Naive thymus-derived CD4-positive, alpha-beta T cell (primary cell): ENCODE measurements at regions of chr3 and their contacts with region 1.

Region 1: GRCh38 chr3:58305882-58306711 is at the starts of genes HTD2 and RPP14:
- DNase-seq: peak; percentile 96 to 99 (median 98)
- ATAC-seq: peak; percentile 95
- H3K4me3 ChIP-seq: peak within 1 kb of the TSS; percentile 90
- H3K4me3 Mint-ChIP-seq: peak within 1 kb of the TSS; percentile 94 to 99 (median 97)
- H3K27ac ChIP-seq: peak within 1 kb of the TSS; percentile 98
- H3K27ac Mint-ChIP-seq: peak within 1 kb of the TSS; percentile 99 to 100 (median 99)
- H3K4me1 ChIP-seq: peaks cover 21 to 24% of the 10 kb centered on the region in 2 donors
- H3K4me1 Mint-ChIP-seq: peaks cover 28 to 47% (median 36%) of the 10 kb centered on the region in 7 donors
- H3K27me3 ChIP-seq: no peaks in the 10 kb centered on the region
- H3K27me3 Mint-ChIP-seq: peaks cover 5 to 13% (median 8%) of the 10 kb centered on the region in 5 donors
- total RNA-seq, gene HTD2: 4.5 to 10.6 (median 9.2) TPM
- total RNA-seq, gene RPP14: 14.8 to 21.6 (median 17.6) TPM

Region 2: DNA sequence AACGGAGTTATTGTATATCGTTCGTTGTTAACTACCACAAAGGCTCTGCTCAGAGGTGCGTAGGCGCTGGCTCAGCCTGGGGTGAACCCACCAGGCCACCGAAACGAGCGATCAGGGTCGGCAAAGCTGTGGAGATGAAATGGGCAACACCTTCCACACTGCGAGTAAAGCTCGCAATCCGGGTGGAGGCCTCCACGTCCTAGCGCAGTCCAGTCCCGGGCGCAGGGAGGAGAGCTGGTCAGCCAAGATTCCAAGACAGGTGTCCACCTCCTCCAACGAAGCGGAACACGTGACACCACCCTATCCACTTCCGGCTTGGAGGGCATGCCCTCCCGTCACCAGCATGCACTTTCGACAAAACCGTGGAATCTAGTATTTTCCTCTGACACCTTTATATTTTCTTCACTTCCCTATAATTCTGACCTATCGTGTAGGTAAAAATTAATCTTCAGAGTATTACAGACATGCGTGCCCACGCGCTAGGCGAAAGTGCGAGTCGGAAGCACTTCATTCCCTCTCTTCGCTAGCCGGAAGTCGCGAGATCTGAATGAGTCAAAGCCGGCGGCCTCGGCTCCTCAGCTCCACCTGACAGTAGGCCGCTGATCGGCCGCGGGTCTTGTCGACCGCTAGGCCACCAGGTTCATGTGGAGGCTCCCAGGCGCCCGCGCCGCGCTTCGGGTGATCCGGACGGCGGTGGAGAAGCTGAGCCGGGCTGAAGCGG is 750.2 kb before region 1 on chr3 and contains the start of gene PDE12:
- CTCF ChIA-PET with region 1: no interaction called
- POLR2A ChIA-PET with region 1: interaction called, 3 read pairs
- intact Hi-C with region 1: loop called in 1 of 2 experiments (anchors 1 kb)
- DNase-seq: peak; percentile 68 to 87 (median 81)
- ATAC-seq: peak; percentile 86
- H3K4me3 ChIP-seq: peak within 1 kb of the TSS; percentile 74
- H3K4me3 Mint-ChIP-seq: peak within 1 kb of the TSS; percentile 85 to 99 (median 92)
- H3K27ac ChIP-seq: peak within 1 kb of the TSS; percentile 96
- H3K27ac Mint-ChIP-seq: peak within 1 kb of the TSS; percentile 94 to 99 (median 98)
- H3K4me1 ChIP-seq: peaks cover 22 to 26% of the 10 kb centered on the region in 2 donors
- H3K4me1 Mint-ChIP-seq: peaks cover 13 to 50% (median 39%) of the 10 kb centered on the region in 7 donors
- H3K27me3 ChIP-seq: no peaks in the 10 kb centered on the region
- H3K27me3 Mint-ChIP-seq: no peaks in the 10 kb centered on the region
- total RNA-seq, gene PDE12: 24.0 to 35.5 (median 27.8) TPM

Region 3: DNA sequence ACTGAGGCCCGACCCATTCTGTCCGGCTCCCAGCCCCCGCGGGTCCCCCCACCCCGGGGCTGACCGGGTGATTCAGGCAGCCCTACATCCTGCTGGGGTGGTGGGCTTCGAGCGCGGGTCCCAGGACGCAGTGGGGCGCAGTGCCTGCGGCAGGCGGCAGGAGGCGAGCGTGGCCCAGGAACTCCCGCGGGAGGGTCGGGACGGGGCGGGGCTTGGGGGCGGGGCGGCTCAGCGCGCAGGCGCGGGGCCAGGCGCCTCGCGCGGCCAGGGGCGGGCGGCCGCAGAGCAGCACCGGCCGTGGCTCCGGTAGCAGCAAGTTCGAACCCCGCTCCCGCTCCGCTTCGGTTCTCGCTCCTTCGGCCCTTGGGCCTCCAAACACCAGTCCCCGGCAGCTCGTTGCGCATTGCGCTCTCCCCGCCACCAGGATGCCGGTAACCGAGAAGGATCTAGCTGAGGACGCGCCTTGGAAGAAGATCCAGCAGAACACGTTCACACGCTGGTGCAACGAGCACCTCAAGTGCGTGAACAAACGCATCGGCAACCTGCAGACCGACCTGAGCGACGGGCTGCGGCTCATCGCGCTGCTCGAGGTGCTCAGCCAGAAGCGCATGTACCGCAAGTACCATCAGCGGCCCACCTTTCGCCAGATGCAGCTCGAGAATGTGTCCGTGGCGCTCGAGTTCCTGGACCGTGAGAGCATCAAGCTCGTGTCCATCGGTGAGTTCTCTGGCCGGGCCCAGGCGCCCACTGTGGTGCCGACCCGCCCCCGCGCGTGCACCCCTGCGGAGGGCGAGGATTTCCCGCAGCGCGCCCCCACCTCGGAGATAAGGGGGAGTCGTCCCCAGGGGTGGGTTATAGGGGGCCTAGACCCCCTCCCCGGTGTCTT is 297.7 kb before region 1 on chr3 and contains the start of gene FLNB:
- CTCF ChIA-PET with region 1: interaction called, 4 read pairs
- POLR2A ChIA-PET with region 1: interaction called, 9 read pairs
- intact Hi-C with region 1: loop called (anchors 1 to 2 kb)
- DNase-seq: peak; percentile 61 to 83 (median 77)
- ATAC-seq: peak; percentile 95
- H3K4me3 ChIP-seq: peak within 1 kb of the TSS; percentile 100
- H3K4me3 Mint-ChIP-seq: peak within 1 kb of the TSS; percentile 78 to 93 (median 90)
- H3K27ac ChIP-seq: peak within 1 kb of the TSS; percentile 66
- H3K27ac Mint-ChIP-seq: peak within 1 kb of the TSS; percentile 61 to 95 (median 81)
- H3K4me1 ChIP-seq: peaks cover 9 to 32% of the 10 kb centered on the region in 2 donors
- H3K4me1 Mint-ChIP-seq: peaks cover 30 to 42% (median 41%) of the 10 kb centered on the region in 7 donors
- H3K27me3 ChIP-seq: no peaks in the 10 kb centered on the region
- H3K27me3 Mint-ChIP-seq: no peaks in the 10 kb centered on the region
- total RNA-seq, gene FLNB: 39.3 to 66.7 (median 64.9) TPM

Region 4: GRCh38 chr3:58025837-58026569 is 280.1 kb before region 1 on chr3:
- CTCF ChIA-PET with region 1: no interaction called
- POLR2A ChIA-PET with region 1: no interaction called
- intact Hi-C with region 1: no loop called
- DNase-seq: no peak
- ATAC-seq: no peak
- H3K4me3 ChIP-seq: no peak overlapping the region
- H3K4me3 Mint-ChIP-seq: peak overlapping the region in 1 of 10 donors; percentile 30
- H3K27ac ChIP-seq: no peak overlapping the region
- H3K27ac Mint-ChIP-seq: peak overlapping the region in 4 of 9 donors; percentile 33 to 71 (median 56)
- H3K4me1 ChIP-seq: no peaks in the 10 kb centered on the region
- H3K4me1 Mint-ChIP-seq: peaks cover 23 to 63% (median 46%) of the 10 kb centered on the region in 7 donors
- H3K27me3 ChIP-seq: no peaks in the 10 kb centered on the region
- H3K27me3 Mint-ChIP-seq: no peaks in the 10 kb centered on the region

Region 5: DNA sequence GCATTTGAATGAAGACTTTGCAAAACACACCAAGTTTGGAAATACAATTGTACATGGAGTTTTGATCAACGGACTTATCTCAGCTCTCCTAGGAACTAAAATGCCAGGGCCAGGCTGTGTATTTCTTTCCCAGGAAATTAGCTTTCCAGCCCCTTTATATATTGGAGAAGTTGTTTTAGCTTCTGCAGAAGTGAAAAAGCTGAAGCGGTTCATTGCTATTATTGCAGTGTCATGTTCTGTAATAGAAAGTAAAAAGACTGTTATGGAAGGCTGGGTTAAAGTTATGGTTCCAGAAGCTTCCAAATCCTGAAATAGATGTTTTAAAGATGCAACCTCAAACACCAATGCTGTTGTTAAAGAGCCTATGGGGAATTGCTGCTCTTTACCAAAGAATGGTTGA is 11.7 kb after region 1 on chr3:
- CTCF ChIA-PET with region 1: interaction called, 42 read pairs
- POLR2A ChIA-PET with region 1: interaction called, 5 read pairs
- intact Hi-C with region 1: no loop called
- DNase-seq: no peak
- ATAC-seq: no peak
- H3K4me3 ChIP-seq: no peak overlapping the region
- H3K4me3 Mint-ChIP-seq: no peak overlapping the region
- H3K27ac ChIP-seq: no peak overlapping the region
- H3K27ac Mint-ChIP-seq: peak overlapping the region in 2 of 9 donors; percentile 17 to 24
- H3K4me1 ChIP-seq: no peaks in the 10 kb centered on the region
- H3K4me1 Mint-ChIP-seq: peaks cover 3 to 23% (median 13%) of the 10 kb centered on the region in 7 donors
- H3K27me3 ChIP-seq: no peaks in the 10 kb centered on the region
- H3K27me3 Mint-ChIP-seq: no peaks in the 10 kb centered on the region

Region 6: DNA sequence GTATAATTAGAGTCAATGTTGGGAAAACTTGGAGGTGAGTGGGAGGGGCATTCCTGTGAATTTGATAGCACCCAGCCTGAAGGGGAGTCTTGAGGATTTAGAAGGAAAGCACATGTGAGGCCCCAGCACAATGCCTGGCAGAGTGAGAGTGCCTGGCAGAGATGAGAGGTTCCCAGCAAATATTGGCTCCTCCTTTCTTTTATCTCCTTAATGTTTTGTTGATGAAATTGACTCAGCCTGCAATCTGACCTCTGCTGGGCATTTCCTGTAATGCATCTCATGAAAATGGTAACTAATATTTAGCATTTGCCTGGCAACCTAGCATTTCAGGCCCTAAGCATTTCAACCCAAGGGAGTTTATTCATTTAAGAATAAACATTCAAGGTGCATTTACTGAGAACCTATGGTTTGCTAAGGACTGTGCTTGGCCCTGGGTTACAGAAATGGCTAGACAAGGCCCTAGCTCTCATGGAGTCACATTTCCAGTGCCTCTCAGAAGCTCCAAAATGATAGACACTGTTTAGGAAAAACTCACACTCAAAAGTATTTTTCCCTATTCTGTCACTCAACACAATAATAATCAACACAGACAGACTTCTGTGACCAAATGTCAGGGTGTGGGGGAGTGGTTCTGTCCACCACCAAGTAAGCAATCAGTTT is 108.6 kb after region 1 on chr3:
- CTCF ChIA-PET with region 1: interaction called, 10 read pairs
- POLR2A ChIA-PET with region 1: interaction called, 3 read pairs
- intact Hi-C with region 1: loop called (anchors 1 kb)
- DNase-seq: peak in 7 of 9 donors; percentile 39 to 59 (median 47)
- ATAC-seq: peak; percentile 83
- H3K4me3 ChIP-seq: no peak overlapping the region
- H3K4me3 Mint-ChIP-seq: no peak overlapping the region
- H3K27ac ChIP-seq: no peak overlapping the region
- H3K27ac Mint-ChIP-seq: peak overlapping the region in 3 of 9 donors; percentile 5 to 48 (median 9)
- H3K4me1 ChIP-seq: no peaks in the 10 kb centered on the region
- H3K4me1 Mint-ChIP-seq: peaks cover 2 to 14% (median 8%) of the 10 kb centered on the region in 7 donors
- H3K27me3 ChIP-seq: no peaks in the 10 kb centered on the region
- H3K27me3 Mint-ChIP-seq: no peaks in the 10 kb centered on the region

Region 7: DNA sequence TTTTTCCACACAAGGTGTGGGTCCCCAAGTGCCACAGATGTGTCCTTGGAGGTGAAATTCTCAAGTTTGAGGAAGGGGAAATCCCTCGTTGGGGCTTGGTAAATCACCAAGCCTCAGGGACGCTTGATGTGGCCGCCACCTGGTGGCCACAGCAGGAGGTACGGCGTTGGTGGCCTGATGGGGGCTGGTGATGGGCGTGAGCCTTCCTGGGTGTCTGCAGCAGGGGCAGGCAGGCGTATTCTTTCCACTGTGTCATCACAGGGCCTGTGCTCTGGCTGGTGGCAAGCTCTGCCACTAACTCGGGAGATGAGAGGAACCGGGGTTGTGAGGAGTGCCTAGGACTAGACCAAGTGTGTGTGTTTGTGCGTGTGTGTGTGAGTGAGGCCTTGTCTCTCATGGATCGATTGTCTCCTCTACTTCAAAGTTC is 226.7 kb after region 1 on chr3:
- CTCF ChIA-PET with region 1: interaction called, 4 read pairs
- POLR2A ChIA-PET with region 1: no interaction called
- intact Hi-C with region 1: loop called (anchors 1 kb)
- DNase-seq: peak; percentile 63 to 80 (median 73)
- ATAC-seq: peak; percentile 97
- H3K4me3 ChIP-seq: no peak overlapping the region
- H3K4me3 Mint-ChIP-seq: peak overlapping the region in 1 of 10 donors; percentile 50
- H3K27ac ChIP-seq: no peak overlapping the region
- H3K27ac Mint-ChIP-seq: peak overlapping the region in 4 of 9 donors; percentile 23 to 42 (median 31)
- H3K4me1 ChIP-seq: peaks cover 0 to 6% of the 10 kb centered on the region in 2 donors
- H3K4me1 Mint-ChIP-seq: peaks cover 5 to 8% (median 7%) of the 10 kb centered on the region in 7 donors
- H3K27me3 ChIP-seq: no peaks in the 10 kb centered on the region
- H3K27me3 Mint-ChIP-seq: peaks cover 0 to 6% (median 0%) of the 10 kb centered on the region in 5 donors

Region 8: DNA sequence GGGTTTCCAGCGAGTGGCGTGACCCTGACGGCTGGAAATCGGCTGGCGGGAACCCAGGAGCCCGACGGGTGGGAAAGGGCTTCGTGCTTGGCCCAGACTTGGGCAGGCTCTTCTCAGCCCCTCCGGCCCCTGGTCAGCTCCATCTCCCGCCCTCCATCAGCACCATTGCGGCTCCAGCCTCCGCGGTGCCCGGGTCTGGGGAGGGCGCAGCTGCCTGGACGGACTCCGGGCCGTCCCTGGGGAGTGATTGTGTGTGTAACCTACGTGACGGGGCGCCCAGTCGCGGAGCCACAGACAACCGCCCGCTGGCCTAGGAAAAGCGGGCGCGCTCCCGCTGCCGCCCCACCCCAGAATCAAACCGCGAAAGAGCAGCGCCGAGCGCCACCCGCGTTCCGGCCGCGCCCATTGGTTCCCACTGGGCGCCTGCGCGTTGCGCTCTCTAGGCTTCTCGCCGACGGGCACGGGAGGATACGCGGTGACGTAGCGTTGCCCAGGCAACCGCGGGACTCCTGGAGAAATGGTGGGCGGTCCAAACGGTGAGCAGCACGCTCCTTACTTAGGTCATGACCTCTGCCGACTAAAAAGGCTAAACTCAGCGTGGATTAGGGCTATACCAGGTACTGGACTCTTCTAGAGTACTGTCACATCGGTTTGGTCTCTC is 743.7 kb after region 1 on chr3 and contains the start of gene CFAP20DC:
- CTCF ChIA-PET with region 1: interaction called, 3 read pairs
- POLR2A ChIA-PET with region 1: no interaction called
- intact Hi-C with region 1: loop called in 1 of 2 experiments (anchors 2 kb)
- DNase-seq: peak; percentile 78 to 90 (median 86)
- ATAC-seq: peak; percentile 96
- H3K4me3 ChIP-seq: peak within 1 kb of the TSS; percentile 69
- H3K4me3 Mint-ChIP-seq: peak within 1 kb of the TSS; percentile 75 to 89 (median 80)
- H3K27ac ChIP-seq: peak within 1 kb of the TSS; percentile 59
- H3K27ac Mint-ChIP-seq: peak within 1 kb of the TSS; percentile 40 to 90 (median 80)
- H3K4me1 ChIP-seq: no peaks in the 10 kb centered on the region
- H3K4me1 Mint-ChIP-seq: peaks cover 0 to 16% (median 10%) of the 10 kb centered on the region in 7 donors
- H3K27me3 ChIP-seq: no peaks in the 10 kb centered on the region
- H3K27me3 Mint-ChIP-seq: peaks cover 0 to 6% (median 0%) of the 10 kb centered on the region in 5 donors
- total RNA-seq, gene CFAP20DC: 0.24 to 1.2 (median 0.43) TPM in 3 of 5 experiments, not detected in the others